Vagina (tissue), 2 donors: ENCODE measurements at regions of chr16 and their contacts with region 1.

Region 1: GRCh38 chr16:57341441-57342303 is 16.9 kb upstream of the CCL22 start:
- DNase-seq: no peak
- H3K4me3 ChIP-seq: no peak overlapping the region
- H3K27ac ChIP-seq: peak overlapping the region; percentile 10
- H3K4me1 ChIP-seq: peaks cover 12% of the 10 kb centered on the region
- H3K27me3 ChIP-seq: no peaks in the 10 kb centered on the region
- CTCF ChIP-seq: no peak
- POLR2A ChIP-seq: no peak

Region 2: GRCh38 chr16:57358527-57359095 is 16.9 kb after region 1 on chr16 and contains the start of gene CCL22:
- intact Hi-C with region 1: loop called (anchors 2 kb)
- DNase-seq: no peak
- H3K4me3 ChIP-seq: no peak within 1 kb of the TSS
- H3K27ac ChIP-seq: no peak within 1 kb of the TSS
- H3K4me1 ChIP-seq: no peaks in the 10 kb centered on the region
- H3K27me3 ChIP-seq: no peaks in the 10 kb centered on the region
- CTCF ChIP-seq: no peak
- POLR2A ChIP-seq: no peak
- total RNA-seq, gene CCL22: 0.49 TPM